CD8-positive, alpha-beta T cell (primary cell): ENCODE measurements at regions of chr5 and their contacts with region 1.

Region 1: DNA sequence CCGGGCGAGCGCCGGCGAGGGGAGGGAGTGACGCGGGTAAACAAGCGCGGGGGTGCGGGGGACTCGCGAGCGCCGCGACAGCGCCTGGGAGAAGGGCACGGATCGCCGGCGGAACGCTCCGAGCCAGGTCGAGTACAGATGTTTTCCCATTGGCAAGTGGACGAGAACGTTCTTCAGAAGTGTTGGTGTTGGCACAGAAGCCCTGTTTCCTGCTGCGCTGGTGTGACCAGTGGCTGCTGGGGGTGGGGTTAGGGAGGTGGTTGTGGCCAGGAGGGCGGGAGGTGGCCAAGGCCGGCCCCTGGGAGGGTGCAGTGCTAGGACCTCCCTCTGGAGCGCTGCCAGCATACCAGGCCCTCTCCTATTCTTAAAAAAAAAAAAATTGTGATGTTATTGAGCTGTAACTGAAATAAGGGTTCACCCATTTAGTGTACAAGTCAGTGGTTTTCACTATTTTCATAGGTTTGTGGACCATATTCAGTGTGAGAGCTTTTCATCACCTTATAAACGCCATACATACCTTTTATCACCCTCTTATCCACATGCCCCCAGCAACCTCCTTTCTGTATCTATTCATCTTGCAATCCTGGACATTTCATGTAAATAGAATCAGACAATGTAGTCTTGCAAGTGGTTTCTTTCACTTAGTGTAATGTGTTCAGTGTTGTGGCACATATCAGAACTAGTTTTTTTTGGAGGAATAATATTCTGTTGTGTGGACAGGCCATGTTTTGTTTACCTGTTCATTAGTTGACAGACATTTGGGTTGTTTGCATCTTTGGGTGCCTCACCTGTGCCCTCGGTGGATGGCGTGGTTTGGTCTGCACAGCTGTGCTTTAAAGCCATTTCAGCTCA is 1.1 kb downstream of the SQSTM1 start:
- DNase-seq: peak; percentile 79 to 94 (median 88)
- ATAC-seq: peak; percentile 63
- H3K4me3 ChIP-seq: peak overlapping the region; percentile 81 to 94
- H3K4me3 Mint-ChIP-seq: peak overlapping the region; percentile 95
- H3K27ac ChIP-seq: peak overlapping the region; percentile 92 to 99
- H3K27ac Mint-ChIP-seq: peak overlapping the region; percentile 96
- H3K4me1 ChIP-seq: peaks cover 47% of the 10 kb centered on the region
- H3K4me1 Mint-ChIP-seq: peaks cover 59% of the 10 kb centered on the region
- H3K27me3 ChIP-seq: peaks cover 0 to 2% of the 10 kb centered on the region in 2 experiments
- H3K27me3 Mint-ChIP-seq: no peaks in the 10 kb centered on the region
- CTCF ChIP-seq: no peak

Region 2: GRCh38 chr5:179788193-179788854 is 33.5 kb before region 1 on chr5:
- CTCF ChIA-PET with region 1: no interaction called
- POLR2A ChIA-PET with region 1: no interaction called
- intact Hi-C with region 1: no loop called
- DNase-seq: no peak
- ATAC-seq: no peak
- H3K4me3 ChIP-seq: no peak overlapping the region
- H3K4me3 Mint-ChIP-seq: no peak overlapping the region
- H3K27ac ChIP-seq: no peak overlapping the region
- H3K27ac Mint-ChIP-seq: no peak overlapping the region
- H3K4me1 ChIP-seq: peaks cover 4% of the 10 kb centered on the region
- H3K4me1 Mint-ChIP-seq: peaks cover 4% of the 10 kb centered on the region
- H3K27me3 ChIP-seq: no peaks in the 10 kb centered on the region
- H3K27me3 Mint-ChIP-seq: no peaks in the 10 kb centered on the region
- CTCF ChIP-seq: no peak

Region 3: DNA sequence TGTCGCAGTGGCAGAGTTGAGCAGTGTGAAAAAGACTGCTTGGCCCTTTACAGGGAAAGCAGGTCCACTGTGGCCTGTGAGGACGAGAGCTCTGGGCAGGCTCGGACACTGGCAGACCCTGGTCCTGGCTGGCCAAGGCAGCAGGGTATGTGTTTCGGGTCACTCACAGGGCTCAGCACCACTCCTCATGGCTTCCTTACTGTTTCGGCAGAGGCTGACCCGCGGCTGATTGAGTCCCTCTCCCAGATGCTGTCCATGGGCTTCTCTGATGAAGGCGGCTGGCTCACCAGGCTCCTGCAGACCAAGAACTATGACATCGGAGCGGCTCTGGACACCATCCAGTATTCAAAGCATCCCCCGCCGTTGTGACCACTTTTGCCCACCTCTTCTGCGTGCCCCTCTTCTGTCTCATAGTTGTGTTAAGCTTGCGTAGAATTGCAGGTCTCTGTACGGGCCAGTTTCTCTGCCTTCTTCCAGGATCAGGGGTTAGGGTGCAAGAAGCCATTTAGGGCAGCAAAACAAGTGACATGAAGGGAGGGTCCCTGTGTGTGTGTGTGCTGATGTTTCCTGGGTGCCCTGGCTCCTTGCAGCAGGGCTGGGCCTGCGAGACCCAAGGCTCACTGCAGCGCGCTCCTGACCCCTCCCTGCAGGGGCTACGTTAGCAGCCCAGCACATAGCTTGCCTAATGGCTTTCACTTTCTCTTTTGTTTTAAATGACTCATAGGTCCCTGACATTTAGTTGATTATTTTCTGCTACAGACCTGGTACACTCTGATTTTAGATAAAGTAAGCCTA is 14.6 kb after region 1 on chr5:
- CTCF ChIA-PET with region 1: interaction called, 3 read pairs
- POLR2A ChIA-PET with region 1: interaction called, 7 read pairs
- intact Hi-C with region 1: loop called in 1 of 2 experiments (anchors 2 kb)
- DNase-seq: peak in 8 of 9 experiments; percentile 33 to 83 (median 60)
- ATAC-seq: peak; percentile 93
- H3K4me3 ChIP-seq: no peak overlapping the region
- H3K4me3 Mint-ChIP-seq: peak overlapping the region; percentile 23
- H3K27ac ChIP-seq: peak overlapping the region; percentile 34 to 70
- H3K27ac Mint-ChIP-seq: peak overlapping the region; percentile 87
- H3K4me1 ChIP-seq: peaks cover 15% of the 10 kb centered on the region
- H3K4me1 Mint-ChIP-seq: peaks cover 17% of the 10 kb centered on the region
- H3K27me3 ChIP-seq: no peaks in the 10 kb centered on the region
- H3K27me3 Mint-ChIP-seq: no peaks in the 10 kb centered on the region
- CTCF ChIP-seq: no peak

Region 4: DNA sequence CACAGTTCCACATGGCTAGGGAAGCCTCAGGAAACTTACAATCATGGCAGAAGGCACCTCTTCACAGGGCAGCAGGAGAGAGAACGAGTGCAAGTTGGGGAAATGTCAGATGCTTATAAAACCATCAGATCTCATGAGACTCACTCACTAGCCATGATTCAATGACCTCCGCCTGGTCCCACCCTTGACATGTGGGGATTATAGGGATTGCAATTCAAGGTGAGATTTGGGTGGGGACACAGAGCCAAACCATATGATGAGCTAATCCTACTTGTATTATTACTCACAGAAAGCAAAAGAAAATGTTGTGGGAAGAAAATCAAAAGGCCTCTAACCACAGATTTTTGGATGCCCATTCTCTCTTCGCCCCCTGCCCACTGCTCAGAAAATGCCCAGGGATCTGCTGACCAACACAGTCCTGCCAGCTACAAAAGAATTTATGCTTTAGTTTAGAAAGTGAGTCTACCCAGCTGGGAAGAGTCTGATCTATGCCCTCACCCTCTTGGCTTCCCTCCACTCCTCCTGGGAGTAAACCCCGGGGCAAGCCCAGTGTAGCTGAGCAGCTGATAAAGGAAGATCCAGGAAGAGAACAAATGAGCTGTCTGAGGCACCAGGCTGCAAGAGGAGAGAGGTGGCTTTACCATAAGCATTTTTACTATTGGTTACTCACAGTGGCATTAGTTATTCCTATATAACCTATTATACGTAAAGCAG is 196.7 kb after region 1 on chr5:
- CTCF ChIA-PET with region 1: no interaction called
- POLR2A ChIA-PET with region 1: no interaction called
- intact Hi-C with region 1: no loop called
- DNase-seq: no peak
- ATAC-seq: no peak
- H3K4me3 ChIP-seq: no peak overlapping the region
- H3K4me3 Mint-ChIP-seq: no peak overlapping the region
- H3K27ac ChIP-seq: no peak overlapping the region
- H3K27ac Mint-ChIP-seq: no peak overlapping the region
- H3K4me1 ChIP-seq: no peaks in the 10 kb centered on the region
- H3K4me1 Mint-ChIP-seq: no peaks in the 10 kb centered on the region
- H3K27me3 ChIP-seq: no peaks in the 10 kb centered on the region
- H3K27me3 Mint-ChIP-seq: no peaks in the 10 kb centered on the region
- CTCF ChIP-seq: no peak

Region 5: GRCh38 chr5:180040255-180041214 is 218.7 kb after region 1 on chr5:
- CTCF ChIA-PET with region 1: no interaction called
- POLR2A ChIA-PET with region 1: no interaction called
- intact Hi-C with region 1: no loop called
- DNase-seq: no peak
- ATAC-seq: no peak
- H3K4me3 ChIP-seq: no peak overlapping the region
- H3K4me3 Mint-ChIP-seq: no peak overlapping the region
- H3K27ac ChIP-seq: no peak overlapping the region
- H3K27ac Mint-ChIP-seq: no peak overlapping the region
- H3K4me1 ChIP-seq: no peaks in the 10 kb centered on the region
- H3K4me1 Mint-ChIP-seq: no peaks in the 10 kb centered on the region
- H3K27me3 ChIP-seq: no peaks in the 10 kb centered on the region
- H3K27me3 Mint-ChIP-seq: no peaks in the 10 kb centered on the region
- CTCF ChIP-seq: no peak